ENCODE measurements at regions of chr13 and their contacts with region 1.

Region 1: DNA sequence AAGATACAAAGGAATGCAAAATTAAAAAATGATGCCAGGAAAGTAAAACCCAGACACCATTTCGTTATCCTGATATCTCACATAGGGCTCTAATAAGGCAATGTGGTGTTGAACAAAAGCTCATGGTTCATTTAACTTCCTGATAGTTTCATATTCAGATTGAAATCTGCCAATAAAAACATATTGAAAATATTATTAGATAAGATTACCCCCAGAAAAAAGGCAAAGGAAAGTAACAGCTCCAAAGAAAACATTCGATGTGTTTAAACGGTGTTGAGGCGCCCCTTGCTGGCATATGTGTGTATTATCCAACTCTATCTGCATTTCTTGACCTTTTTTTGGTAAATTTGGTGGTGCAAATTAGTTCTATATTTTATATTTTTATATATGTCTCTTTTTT is 75.9 kb downstream of the ESD start:
- DNase-seq: peak in 1 of 2 donors; percentile 64
- ATAC-seq: peak; percentile 61

Region 2: GRCh38 chr13:45683701-45684100 is 1037.4 kb before region 1 on chr13:
- intact Hi-C with region 1: no loop called
- DNase-seq: no peak
- ATAC-seq: no peak

Region 3: DNA sequence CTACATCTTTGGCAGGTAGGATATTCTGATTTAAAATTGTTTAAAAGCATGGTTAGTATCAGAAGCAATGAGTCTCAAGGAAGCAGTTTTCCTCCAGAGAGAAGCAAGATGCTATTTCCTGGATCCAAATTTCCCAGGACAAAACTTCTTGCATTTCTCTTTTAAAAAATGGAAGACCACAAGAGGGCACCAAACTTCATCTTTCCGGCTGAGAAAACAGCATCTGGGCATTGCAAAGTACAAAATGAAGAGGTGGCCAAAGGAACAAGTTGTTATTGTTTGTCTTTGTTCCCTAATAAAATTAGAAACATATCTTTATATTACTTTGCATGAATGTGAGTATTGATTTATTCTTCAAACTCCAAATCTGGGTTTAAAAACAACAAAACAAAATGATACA is 228.1 kb before region 1 on chr13:
- intact Hi-C with region 1: loop called (anchors 5 to 10 kb)
- DNase-seq: no peak
- ATAC-seq: peak; percentile 33

Region 4: GRCh38 chr13:46559272-46559805 is 161.7 kb before region 1 on chr13:
- intact Hi-C with region 1: no loop called
- DNase-seq: no peak
- ATAC-seq: no peak

Measured in left colon (tissue), 2 donors.